A549 (cell line): ENCODE measurements at regions of chr17 and their contacts with region 1.

Region 1: DNA sequence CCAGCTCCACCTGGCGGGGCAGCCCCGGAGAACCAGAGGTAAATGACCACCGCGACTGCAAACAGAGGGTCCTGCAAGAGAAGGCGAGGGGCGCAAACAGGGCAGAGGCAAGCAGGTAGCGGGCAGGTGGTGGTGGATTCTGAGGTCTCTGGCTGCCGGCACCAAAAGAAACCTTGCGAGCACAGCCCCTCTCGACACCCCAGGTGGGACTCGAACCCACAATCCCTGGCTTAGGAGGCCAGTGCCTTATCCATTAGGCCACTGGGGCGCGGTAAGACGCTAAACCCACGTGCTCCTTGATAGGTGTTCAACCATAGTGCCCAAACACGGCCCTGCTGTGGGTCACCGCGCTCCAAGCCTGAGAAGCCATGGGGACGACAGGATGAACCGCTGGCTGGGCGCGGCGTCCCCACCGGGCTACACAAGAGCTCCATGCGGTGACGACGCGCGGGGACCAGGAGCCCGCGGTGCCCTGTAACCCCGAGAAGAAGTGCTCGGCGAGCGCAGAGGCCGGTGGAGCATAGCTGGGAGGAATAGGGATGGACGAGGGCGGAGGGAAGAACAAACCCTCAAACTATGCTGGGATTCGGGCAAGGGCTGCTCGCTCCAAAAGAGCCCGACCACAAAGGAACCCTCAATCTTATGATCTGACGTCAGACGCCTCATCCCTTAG is 12.4 kb downstream of the ATP5PD start:
- DNase-seq: peak; percentile 81 to 97
- ATAC-seq: peak; percentile 57 to 71
- H3K4me3 ChIP-seq: peak overlapping the region; percentile 73
- H3K27ac ChIP-seq: peak overlapping the region; percentile 97
- H3K4me1 ChIP-seq: peaks cover 30% of the 10 kb centered on the region
- CTCF ChIP-seq: no peak
- EP300 ChIP-seq: no peak
- POLR2A ChIP-seq: no peak
- RAD21 ChIP-seq: no peak; a peak in 1 of 5 replicates

Region 2: DNA sequence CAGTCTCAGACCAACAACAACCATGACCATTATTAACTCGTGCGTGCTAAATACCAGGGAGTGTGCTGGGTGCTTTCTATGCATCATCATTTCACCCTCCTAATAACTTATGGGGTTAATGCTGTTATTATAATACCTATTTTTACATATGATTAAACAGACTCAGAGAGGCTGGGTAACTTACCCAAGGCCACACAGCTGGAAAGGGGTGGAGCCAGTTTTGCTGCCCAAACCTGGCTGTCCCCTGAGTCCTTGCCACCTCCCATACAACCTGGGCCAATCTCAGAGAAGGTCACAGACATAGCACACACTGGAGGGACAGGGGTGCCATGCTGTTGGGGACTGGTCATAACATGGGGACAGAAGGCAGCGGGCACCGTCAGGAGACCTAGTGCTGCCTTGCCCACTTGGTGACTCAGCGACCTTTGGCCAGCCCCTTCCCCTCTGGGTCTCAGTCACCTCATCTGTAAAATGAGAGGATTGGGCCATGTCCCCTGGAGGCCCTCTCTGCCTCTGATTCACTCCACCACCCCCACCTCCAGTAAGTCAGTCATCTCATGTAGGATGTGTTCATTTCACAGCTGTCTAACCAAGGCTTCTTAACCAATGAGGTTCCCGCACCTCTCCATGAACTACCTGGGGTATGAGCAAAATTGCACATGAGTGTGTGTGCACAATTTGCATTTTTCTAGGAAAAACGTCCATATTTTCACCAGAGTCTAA is 129.5 kb before region 1 on chr17:
- CTCF ChIA-PET with region 1: no interaction called
- POLR2A ChIA-PET with region 1: interaction called, 10 read pairs
- DNase-seq: no peak
- ATAC-seq: no peak
- H3K4me3 ChIP-seq: no peak overlapping the region
- H3K27ac ChIP-seq: no peak overlapping the region
- H3K4me1 ChIP-seq: no peaks in the 10 kb centered on the region
- CTCF ChIP-seq: no peak
- EP300 ChIP-seq: no peak
- POLR2A ChIP-seq: no peak
- RAD21 ChIP-seq: no peak

Region 3: GRCh38 chr17:75046582-75047289 is 12.4 kb after region 1 on chr17 and contains the starts of genes ATP5PD and KCTD2:
- CTCF ChIA-PET with region 1: interaction called, 21 read pairs
- POLR2A ChIA-PET with region 1: interaction called, 21 read pairs
- DNase-seq: peak; percentile 98 to 99
- ATAC-seq: peak; percentile 98 to 99
- H3K4me3 ChIP-seq: peak within 1 kb of the TSS; percentile 94
- H3K27ac ChIP-seq: peak within 1 kb of the TSS; percentile 93 to 97
- H3K4me1 ChIP-seq: peaks cover 16% of the 10 kb centered on the region
- CTCF ChIP-seq: no peak
- EP300 ChIP-seq: no peak
- POLR2A ChIP-seq: peak; percentile 90
- RAD21 ChIP-seq: 0 out of 5 replicates have a peak, but pooled peaks of 1 of the 2 experiments have one; percentile 21
- polyA plus RNA-seq, gene ATP5PD: 314 and 333 TPM in 2 replicates
- polyA plus RNA-seq, gene KCTD2: 31.3 and 34.1 TPM in 2 replicates

Region 4: GRCh38 chr17:75087558-75088453 is 53.4 kb after region 1 on chr17 and contains the start of gene SLC16A5:
- CTCF ChIA-PET with region 1: interaction called, 5 read pairs
- POLR2A ChIA-PET with region 1: interaction called, 12 read pairs
- DNase-seq: peak; percentile 95 to 99
- ATAC-seq: peak; percentile 75 to 82
- H3K4me3 ChIP-seq: peak within 1 kb of the TSS; percentile 67
- H3K27ac ChIP-seq: peak within 1 kb of the TSS; percentile 95 to 96
- H3K4me1 ChIP-seq: peaks cover 77% of the 10 kb centered on the region
- CTCF ChIP-seq: no peak
- EP300 ChIP-seq: no peak
- POLR2A ChIP-seq: peak; percentile 87
- RAD21 ChIP-seq: peak in 1 of 2 experiments; percentile 28; a peak in 1 of 5 replicates
- polyA plus RNA-seq, gene SLC16A5: 19.0 and 20.1 TPM in 2 replicates

Region 5: GRCh38 chr17:75199886-75200618 is 165.7 kb after region 1 on chr17:
- CTCF ChIA-PET with region 1: interaction called, 16 read pairs
- POLR2A ChIA-PET with region 1: no interaction called
- DNase-seq: no peak
- ATAC-seq: no peak
- H3K4me3 ChIP-seq: no peak overlapping the region
- H3K27ac ChIP-seq: no peak overlapping the region
- H3K4me1 ChIP-seq: peaks cover 4% of the 10 kb centered on the region; the same call in 1 of the 3 replicates
- CTCF ChIP-seq: no peak
- EP300 ChIP-seq: no peak
- POLR2A ChIP-seq: no peak
- RAD21 ChIP-seq: no peak